Heart right ventricle (tissue), 16 donors: ENCODE measurements at regions of chr15 and their contacts with region 1.

Region 1: GRCh38 chr15:37995461-37996347 is 61.3 kb downstream of the TMCO5A start:
- DNase-seq: peak in 1 of 2 donors; percentile 39
- ATAC-seq: peak; percentile 74 to 88 (median 81)
- H3K4me3 ChIP-seq: no peak overlapping the region
- H3K27ac ChIP-seq: no peak overlapping the region
- H3K4me1 ChIP-seq: peaks cover 0 to 2% (median 0%) of the 10 kb centered on the region in 9 donors
- H3K27me3 ChIP-seq: peaks cover 0 to 4% (median 0%) of the 10 kb centered on the region in 7 donors
- CTCF ChIP-seq: peak; percentile 51 to 80 (median 70)

Region 2: GRCh38 chr15:37933666-37934065 is 62.0 kb before region 1 on chr15:
- intact Hi-C with region 1: no loop called
- DNase-seq: no peak
- ATAC-seq: peak in 1 of 8 donors; percentile 43
- H3K4me3 ChIP-seq: no peak overlapping the region
- H3K27ac ChIP-seq: no peak overlapping the region
- H3K4me1 ChIP-seq: no peaks in the 10 kb centered on the region
- H3K27me3 ChIP-seq: peaks cover 0 to 3% (median 0%) of the 10 kb centered on the region in 7 donors
- CTCF ChIP-seq: no peak

Region 3: DNA sequence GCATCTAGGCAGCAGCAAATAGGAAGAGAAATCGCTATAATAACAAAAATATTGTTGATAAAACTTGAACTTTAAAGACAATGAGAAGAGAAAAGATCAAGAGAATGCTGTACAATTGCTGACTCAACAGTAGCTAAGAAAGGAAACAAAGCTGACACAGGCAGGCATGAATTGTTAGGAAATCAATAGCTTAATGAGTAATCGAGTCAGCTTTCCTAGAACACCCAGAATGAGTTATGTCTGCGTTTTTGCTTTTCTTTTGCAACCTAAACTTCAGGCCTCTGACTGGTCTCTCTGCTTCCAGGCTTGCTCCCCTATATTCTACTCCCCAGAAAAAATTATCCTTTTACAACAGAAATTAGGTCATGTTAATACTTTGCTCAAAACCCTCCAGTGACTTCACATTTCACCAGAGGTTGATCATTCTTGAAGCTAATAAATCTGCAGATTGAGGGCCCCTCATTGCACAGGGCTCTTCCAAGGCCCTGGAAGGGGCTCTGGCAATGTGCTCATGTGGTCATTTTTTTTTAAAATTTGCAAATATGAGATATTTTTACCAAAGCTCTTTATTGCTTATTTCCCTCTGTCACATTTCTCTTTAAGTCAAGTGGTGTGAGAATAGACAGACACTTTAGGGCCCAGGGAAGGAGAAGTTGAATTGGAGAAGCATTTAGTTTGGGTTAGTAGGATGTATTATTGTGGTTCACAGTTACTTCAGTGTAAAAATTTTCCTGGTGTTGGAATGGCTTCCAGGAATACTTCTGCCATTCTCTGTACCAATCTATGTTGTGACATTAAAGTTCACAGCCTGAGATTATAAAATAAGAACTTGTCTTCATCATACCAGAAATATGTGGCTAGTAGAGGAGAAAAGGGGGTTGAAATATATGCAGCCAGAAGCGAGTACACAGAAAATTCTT is 55.1 kb after region 1 on chr15:
- intact Hi-C with region 1: no loop called
- DNase-seq: no peak
- ATAC-seq: peak in 1 of 8 donors; percentile 55
- H3K4me3 ChIP-seq: no peak overlapping the region
- H3K27ac ChIP-seq: peak overlapping the region in 2 of 10 donors; percentile 2 to 76
- H3K4me1 ChIP-seq: peaks cover 0 to 24% (median 0%) of the 10 kb centered on the region in 9 donors
- H3K27me3 ChIP-seq: no peaks in the 10 kb centered on the region
- CTCF ChIP-seq: no peak

Region 4: GRCh38 chr15:38378161-38378560 is 382.5 kb after region 1 on chr15:
- intact Hi-C with region 1: no loop called
- DNase-seq: peak; percentile 66 to 78
- ATAC-seq: peak; percentile 74 to 88 (median 81)
- H3K4me3 ChIP-seq: no peak overlapping the region
- H3K27ac ChIP-seq: peak overlapping the region; percentile 22 to 80 (median 68)
- H3K4me1 ChIP-seq: peaks cover 4 to 54% (median 33%) of the 10 kb centered on the region in 9 donors
- H3K27me3 ChIP-seq: no peaks in the 10 kb centered on the region
- CTCF ChIP-seq: no peak

Region 5: DNA sequence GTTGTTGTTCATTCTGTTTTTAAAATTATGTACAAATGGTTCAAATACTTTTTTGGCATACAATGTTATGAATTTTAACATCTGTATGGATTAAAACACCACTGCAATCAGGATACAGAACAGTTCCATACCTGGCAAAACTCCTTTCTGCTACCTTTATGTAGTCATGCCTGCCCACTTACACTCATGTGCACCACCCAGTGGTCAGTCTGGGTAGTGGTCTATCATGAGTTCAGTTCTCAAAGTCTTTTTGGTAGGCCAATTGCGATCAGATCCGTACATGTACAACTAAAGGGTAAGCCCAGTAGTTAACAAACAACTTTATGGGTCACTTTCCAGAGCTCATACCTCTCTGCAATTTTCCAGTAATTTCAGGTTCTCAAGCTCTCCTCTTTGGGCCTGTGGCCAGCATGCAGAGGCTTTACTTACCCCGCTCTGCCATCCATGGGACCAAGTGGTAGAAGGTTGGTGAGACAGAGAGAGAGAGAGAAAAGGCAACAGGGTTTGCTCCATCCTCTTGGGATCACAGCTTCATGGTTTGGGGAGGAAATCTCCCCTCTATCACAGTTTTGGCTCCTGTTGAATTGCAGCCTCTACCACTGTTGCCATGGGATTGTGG is 394.3 kb after region 1 on chr15:
- intact Hi-C with region 1: loop called in 3 of 10 experiments (anchors 2 to 10 kb)
- DNase-seq: peak; percentile 18 to 66
- ATAC-seq: peak in 4 of 8 donors; percentile 47 to 70 (median 50)
- H3K4me3 ChIP-seq: no peak overlapping the region
- H3K27ac ChIP-seq: no peak overlapping the region
- H3K4me1 ChIP-seq: peaks cover 0 to 5% (median 0%) of the 10 kb centered on the region in 9 donors
- H3K27me3 ChIP-seq: no peaks in the 10 kb centered on the region
- CTCF ChIP-seq: peak; percentile 55 to 83 (median 79)

Region 6: DNA sequence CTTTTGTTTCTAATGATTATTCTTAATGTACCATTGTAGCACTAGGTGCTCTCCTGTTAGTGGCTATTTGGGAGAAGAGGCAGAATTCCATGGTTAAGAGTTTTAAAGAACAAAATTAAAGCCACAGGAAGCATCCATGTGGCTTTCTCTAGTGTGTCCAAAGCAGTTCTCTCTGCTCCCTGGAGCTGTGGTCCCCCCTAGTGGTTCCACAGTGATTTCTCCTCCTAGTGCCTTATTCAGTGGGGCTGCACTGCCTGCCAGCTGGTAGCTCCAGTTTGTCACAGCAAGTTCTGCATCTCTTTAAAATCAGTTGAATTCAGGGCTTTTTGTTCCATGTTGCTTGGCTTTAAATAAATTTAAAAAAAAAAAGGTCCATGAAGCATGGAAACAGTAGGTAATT is 418.7 kb after region 1 on chr15:
- intact Hi-C with region 1: loop called in 8 of 10 experiments (anchors 5 to 10 kb)
- DNase-seq: peak; percentile 35 to 66
- ATAC-seq: peak in 7 of 8 donors; percentile 88 to 94 (median 93)
- H3K4me3 ChIP-seq: no peak overlapping the region
- H3K27ac ChIP-seq: no peak overlapping the region
- H3K4me1 ChIP-seq: peaks cover 0 to 10% (median 0%) of the 10 kb centered on the region in 9 donors
- H3K27me3 ChIP-seq: peaks cover 0 to 15% (median 0%) of the 10 kb centered on the region in 7 donors
- CTCF ChIP-seq: peak; percentile 45 to 75 (median 66)

Region 7: GRCh38 chr15:38683382-38684242 is 687.9 kb after region 1 on chr15:
- intact Hi-C with region 1: loop called in 7 of 10 experiments (anchors 5 to 10 kb)
- DNase-seq: peak; percentile 18 to 42
- ATAC-seq: peak in 7 of 8 donors; percentile 56 to 81 (median 69)
- H3K4me3 ChIP-seq: no peak overlapping the region
- H3K27ac ChIP-seq: peak overlapping the region in 1 of 10 donors; percentile 66
- H3K4me1 ChIP-seq: peaks cover 0 to 28% (median 0%) of the 10 kb centered on the region in 9 donors
- H3K27me3 ChIP-seq: peaks cover 0 to 7% (median 0%) of the 10 kb centered on the region in 7 donors
- CTCF ChIP-seq: peak; percentile 52 to 81 (median 74)

Region 8: GRCh38 chr15:38690689-38691332 is 695.1 kb after region 1 on chr15:
- intact Hi-C with region 1: loop called in 8 of 10 experiments (anchors 5 to 10 kb)
- DNase-seq: peak; percentile 21 to 39
- ATAC-seq: peak in 4 of 8 donors; percentile 20 to 50 (median 34)
- H3K4me3 ChIP-seq: no peak overlapping the region
- H3K27ac ChIP-seq: no peak overlapping the region
- H3K4me1 ChIP-seq: peaks cover 0 to 17% (median 0%) of the 10 kb centered on the region in 9 donors
- H3K27me3 ChIP-seq: no peaks in the 10 kb centered on the region
- CTCF ChIP-seq: peak; percentile 59 to 88 (median 78)

Region 9: DNA sequence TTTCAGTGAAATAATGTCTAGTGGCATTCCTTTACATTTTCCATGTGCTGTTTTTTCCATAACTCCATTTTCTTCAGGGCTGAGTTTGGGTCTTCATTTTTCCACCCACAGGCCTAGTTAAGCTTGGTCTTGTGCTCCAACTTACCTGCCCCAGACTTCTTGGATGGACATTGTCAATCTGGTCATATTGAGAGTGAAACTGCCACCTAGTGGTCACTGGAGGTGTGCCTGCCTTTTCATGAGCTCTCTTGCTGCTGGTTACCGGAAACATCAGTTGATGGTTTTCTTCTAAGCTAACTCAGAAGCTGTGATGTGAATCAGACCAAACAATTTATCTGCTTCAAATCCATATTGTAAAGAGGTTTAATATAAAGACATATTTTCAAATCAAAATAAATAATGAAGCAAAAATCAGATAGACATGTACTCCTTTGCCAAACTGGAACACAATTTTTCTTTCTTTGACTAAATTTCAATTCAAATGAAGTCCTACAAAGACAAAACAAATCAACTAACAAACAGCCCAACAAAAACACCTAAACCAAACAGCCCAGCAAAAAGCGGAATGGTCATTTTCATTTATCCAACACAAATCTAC is 704.0 kb after region 1 on chr15:
- intact Hi-C with region 1: loop called in 1 of 10 experiments (anchors 10 kb)
- DNase-seq: peak; percentile 11 to 55
- ATAC-seq: peak in 3 of 8 donors; percentile 40 to 50 (median 49)
- H3K4me3 ChIP-seq: no peak overlapping the region
- H3K27ac ChIP-seq: no peak overlapping the region
- H3K4me1 ChIP-seq: peaks cover 0 to 10% (median 0%) of the 10 kb centered on the region in 9 donors
- H3K27me3 ChIP-seq: peaks cover 0 to 15% (median 0%) of the 10 kb centered on the region in 7 donors
- CTCF ChIP-seq: peak; percentile 59 to 93 (median 81)